B cell (primary cell): ENCODE measurements at regions of chr19 and their contacts with region 1.

Region 1: DNA sequence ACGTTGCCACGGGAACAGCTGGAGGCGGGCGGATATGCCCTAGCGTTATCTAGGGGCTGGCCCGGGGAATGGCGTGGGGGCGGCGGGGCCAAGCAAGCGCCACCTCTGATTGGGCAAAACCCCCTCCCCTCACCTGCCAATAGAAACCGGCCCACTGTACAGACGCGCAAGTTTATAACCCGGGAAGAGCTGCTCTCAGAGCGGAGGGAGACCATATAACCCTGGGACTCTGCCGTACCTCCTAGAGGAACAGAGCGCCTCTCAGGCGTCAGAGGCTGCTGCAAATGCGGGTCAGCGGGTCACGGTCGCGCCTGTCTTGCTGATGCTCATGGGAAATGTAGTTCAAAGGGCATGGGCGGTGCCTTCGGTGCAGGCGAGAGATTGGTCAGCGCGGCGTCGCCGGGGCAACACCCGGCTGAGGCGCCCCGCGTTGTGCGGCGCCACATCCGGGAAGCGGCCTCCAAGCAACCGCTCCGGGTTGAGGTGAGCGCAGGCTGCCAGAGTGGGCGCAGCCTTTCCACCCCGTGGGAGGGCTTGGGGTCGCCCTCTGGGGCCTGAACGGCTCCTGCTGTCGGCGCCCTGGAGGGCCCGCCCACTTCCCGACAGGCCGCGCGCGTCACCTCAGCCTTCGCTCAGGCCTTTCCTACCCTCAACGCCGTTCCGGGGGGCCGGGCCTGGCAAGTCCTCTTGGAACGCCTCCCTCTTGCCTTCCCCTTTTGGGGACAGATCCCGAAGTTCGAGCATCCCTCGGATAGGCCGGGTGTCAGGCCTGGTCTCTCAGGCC is at the start of gene ZNF446:
- DNase-seq: peak; percentile 97
- ATAC-seq: peak; percentile 89
- H3K4me3 ChIP-seq: peak within 1 kb of the TSS; percentile 39 to 85 (median 70)
- H3K4me3 Mint-ChIP-seq: peak within 1 kb of the TSS; percentile 98
- H3K27ac ChIP-seq: peak within 1 kb of the TSS; percentile 82 to 89
- H3K27ac Mint-ChIP-seq: peak within 1 kb of the TSS; percentile 98
- H3K4me1 ChIP-seq: peaks cover 14 to 18% of the 10 kb centered on the region in 2 donors
- H3K4me1 Mint-ChIP-seq: peaks cover 20% of the 10 kb centered on the region
- H3K27me3 ChIP-seq: no peaks in the 10 kb centered on the region
- H3K27me3 Mint-ChIP-seq: no peaks in the 10 kb centered on the region
- CTCF ChIP-seq: no peak
- total RNA-seq, gene ZNF446: 15.0 and 18.5 TPM in 2 replicates

Region 2: GRCh38 chr19:57888560-57889231 is 587.2 kb before region 1 on chr19 and contains the start of gene ZNF814:
- CTCF ChIA-PET with region 1: no interaction called
- POLR2A ChIA-PET with region 1: no interaction called
- intact Hi-C with region 1: no loop called
- DNase-seq: peak; percentile 91
- ATAC-seq: peak; percentile 93
- H3K4me3 ChIP-seq: peak within 1 kb of the TSS; percentile 75 to 97 (median 85)
- H3K4me3 Mint-ChIP-seq: peak within 1 kb of the TSS; percentile 95
- H3K27ac ChIP-seq: peak within 1 kb of the TSS; percentile 76 to 86
- H3K27ac Mint-ChIP-seq: peak within 1 kb of the TSS; percentile 90
- H3K4me1 ChIP-seq: peaks cover 17 to 19% of the 10 kb centered on the region in 2 donors
- H3K4me1 Mint-ChIP-seq: peaks cover 31% of the 10 kb centered on the region
- H3K27me3 ChIP-seq: no peaks in the 10 kb centered on the region
- H3K27me3 Mint-ChIP-seq: no peaks in the 10 kb centered on the region
- CTCF ChIP-seq: peak; percentile 40
- total RNA-seq, gene ZNF814: 83.9 and 95.1 TPM in 2 replicates

Region 3: DNA sequence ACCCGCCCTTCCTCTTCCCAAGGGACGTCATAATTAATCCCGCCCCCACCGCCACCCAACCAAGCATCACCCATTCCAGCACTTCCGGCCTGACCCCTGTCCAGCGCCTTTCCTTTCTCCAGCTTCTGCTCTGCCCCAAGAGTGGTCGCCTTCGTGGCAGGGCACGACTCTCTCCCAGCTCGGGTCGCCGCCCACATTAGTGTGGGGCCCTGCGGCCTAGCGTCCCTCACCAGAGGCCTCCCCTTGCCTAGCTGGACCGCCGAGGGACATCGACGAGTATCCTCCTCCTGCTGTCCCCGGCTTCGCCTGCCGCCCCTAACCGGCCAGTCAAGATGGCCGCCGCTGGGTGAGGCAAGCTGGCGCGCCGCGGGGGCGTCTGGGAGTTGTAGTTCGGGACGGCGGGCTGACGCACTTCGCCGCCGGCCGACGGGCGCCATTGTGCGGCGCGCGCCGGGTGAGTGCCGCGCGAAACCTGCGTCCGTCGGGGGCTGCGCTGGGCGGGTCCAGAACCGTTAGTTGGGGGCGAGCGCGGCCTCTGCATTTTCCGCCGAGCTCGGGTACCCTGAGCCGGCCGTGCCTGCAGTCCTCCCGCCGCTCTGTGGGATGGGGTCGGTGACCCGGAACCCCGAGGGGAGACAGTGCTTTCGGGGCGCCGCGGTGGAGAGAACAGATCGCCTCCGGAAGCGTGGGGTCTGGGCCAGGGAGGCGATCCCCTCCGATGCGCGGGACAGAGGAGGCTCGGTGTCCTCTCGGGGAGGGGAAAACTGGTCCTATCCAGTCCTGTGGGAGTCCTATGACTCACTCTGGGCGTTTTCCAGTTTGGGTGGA is 292.7 kb before region 1 on chr19 and contains the start of gene ZNF274:
- CTCF ChIA-PET with region 1: no interaction called
- POLR2A ChIA-PET with region 1: no interaction called
- intact Hi-C with region 1: loop called (anchors 2 kb)
- DNase-seq: peak; percentile 97
- ATAC-seq: peak; percentile 85
- H3K4me3 ChIP-seq: peak within 1 kb of the TSS; percentile 78 to 100 (median 88)
- H3K4me3 Mint-ChIP-seq: peak within 1 kb of the TSS; percentile 96
- H3K27ac ChIP-seq: peak within 1 kb of the TSS; percentile 99 to 100
- H3K27ac Mint-ChIP-seq: peak within 1 kb of the TSS; percentile 100
- H3K4me1 ChIP-seq: peaks cover 12 to 20% of the 10 kb centered on the region in 2 donors
- H3K4me1 Mint-ChIP-seq: peaks cover 26% of the 10 kb centered on the region
- H3K27me3 ChIP-seq: no peaks in the 10 kb centered on the region
- H3K27me3 Mint-ChIP-seq: no peaks in the 10 kb centered on the region
- CTCF ChIP-seq: no peak
- total RNA-seq, gene ZNF274: 83.7 and 85.4 TPM in 2 replicates

Region 4: DNA sequence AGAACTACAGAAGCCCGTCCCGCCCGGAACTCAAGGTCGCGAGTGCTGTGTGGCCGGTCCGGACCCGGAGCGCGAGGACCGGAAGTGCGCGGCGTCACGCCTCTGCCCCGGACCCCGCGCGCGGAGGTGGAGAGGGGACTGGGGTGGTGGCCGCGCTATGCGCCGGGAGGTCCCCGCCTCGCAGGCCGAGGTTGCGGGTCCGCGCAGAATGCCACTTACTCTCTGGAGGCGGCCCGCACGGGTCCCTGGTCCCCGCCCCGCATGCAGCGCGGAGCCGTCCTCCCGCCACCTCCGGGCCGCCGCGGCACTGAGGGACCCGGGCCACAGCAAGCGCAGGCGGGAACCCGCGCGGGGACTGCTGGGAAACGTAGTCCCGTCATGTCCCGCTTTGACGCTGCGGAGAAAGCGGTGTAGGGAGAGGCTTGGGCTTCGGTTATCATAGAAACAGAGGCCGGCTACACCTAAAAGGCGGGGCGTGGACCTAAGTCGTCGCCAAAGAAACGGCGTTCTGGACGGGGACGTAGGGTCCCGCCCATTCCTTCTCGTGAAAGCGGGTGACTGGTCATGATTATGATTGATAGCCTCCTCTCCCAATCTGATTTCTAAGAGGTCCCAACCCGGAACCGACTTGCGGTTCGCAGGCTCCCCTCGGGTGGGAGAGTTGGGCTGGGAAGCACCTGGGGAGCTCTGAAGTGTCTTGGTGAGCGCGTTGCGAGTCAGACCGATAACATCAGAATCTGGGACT is 95.0 kb before region 1 on chr19 and contains the start of gene ZNF837:
- CTCF ChIA-PET with region 1: interaction called, 4 read pairs
- POLR2A ChIA-PET with region 1: interaction called, 3 read pairs
- intact Hi-C with region 1: loop called (anchors 1 kb)
- DNase-seq: peak; percentile 100
- ATAC-seq: peak; percentile 86
- H3K4me3 ChIP-seq: peak within 1 kb of the TSS; percentile 22 to 78 (median 71)
- H3K4me3 Mint-ChIP-seq: peak within 1 kb of the TSS; percentile 92
- H3K27ac ChIP-seq: peak within 1 kb of the TSS; percentile 89 to 97
- H3K27ac Mint-ChIP-seq: peak within 1 kb of the TSS; percentile 95
- H3K4me1 ChIP-seq: peaks cover 27 to 35% of the 10 kb centered on the region in 2 donors
- H3K4me1 Mint-ChIP-seq: peaks cover 32% of the 10 kb centered on the region
- H3K27me3 ChIP-seq: no peaks in the 10 kb centered on the region
- H3K27me3 Mint-ChIP-seq: no peaks in the 10 kb centered on the region
- CTCF ChIP-seq: no peak
- total RNA-seq, gene ZNF837: 3.1 and 4.2 TPM in 2 replicates

Region 5: DNA sequence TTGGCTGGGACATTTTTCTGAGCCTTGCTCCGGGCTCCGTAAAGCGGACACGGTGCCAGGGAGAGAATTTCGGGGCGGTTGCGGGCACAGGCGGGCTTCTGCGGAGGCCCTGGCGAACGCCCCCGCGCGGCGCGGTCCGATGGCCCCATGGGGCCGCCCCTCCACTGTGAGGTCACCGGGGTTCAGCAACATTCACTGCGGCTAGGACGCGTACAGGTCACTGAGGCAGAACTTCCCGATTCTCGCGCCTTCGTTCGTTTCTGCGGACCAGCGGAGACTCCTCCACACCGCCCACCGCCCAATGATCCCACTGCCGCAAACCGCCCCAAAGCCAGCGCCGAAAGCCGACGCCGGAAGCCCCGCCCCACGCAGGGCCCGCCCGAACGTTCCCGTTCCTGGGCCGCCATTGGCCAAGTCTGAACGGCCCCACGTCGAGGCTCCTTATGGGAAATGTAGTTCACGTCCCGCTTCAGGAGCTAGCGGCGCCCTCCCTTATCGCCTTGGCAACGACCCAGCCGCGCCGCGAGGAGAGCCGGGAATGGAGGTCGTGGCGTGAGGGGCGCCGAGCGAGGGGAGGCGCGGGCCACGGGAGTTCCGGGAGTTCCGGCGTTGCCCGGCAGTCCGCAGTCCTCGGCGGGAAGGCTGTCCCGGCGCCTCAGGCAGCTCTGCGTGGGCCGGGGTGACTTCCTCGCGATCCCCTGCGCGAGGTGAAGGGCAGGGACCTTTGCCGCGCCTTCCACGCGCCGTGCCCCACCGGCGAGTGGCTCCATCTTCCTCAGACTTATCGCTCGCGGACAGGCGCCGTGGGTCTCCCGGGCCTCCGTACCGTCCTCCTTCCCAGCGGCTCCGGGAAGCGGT is 67.5 kb before region 1 on chr19 and contains the start of gene ZNF584:
- CTCF ChIA-PET with region 1: no interaction called
- POLR2A ChIA-PET with region 1: no interaction called
- intact Hi-C with region 1: loop called (anchors 1 kb)
- DNase-seq: peak; percentile 96
- ATAC-seq: peak; percentile 96
- H3K4me3 ChIP-seq: peak within 1 kb of the TSS; percentile 58 to 93 (median 83)
- H3K4me3 Mint-ChIP-seq: peak within 1 kb of the TSS; percentile 97
- H3K27ac ChIP-seq: peak within 1 kb of the TSS; percentile 82 to 93
- H3K27ac Mint-ChIP-seq: peak within 1 kb of the TSS; percentile 98
- H3K4me1 ChIP-seq: peaks cover 11 to 20% of the 10 kb centered on the region in 2 donors
- H3K4me1 Mint-ChIP-seq: peaks cover 33% of the 10 kb centered on the region
- H3K27me3 ChIP-seq: no peaks in the 10 kb centered on the region
- H3K27me3 Mint-ChIP-seq: no peaks in the 10 kb centered on the region
- CTCF ChIP-seq: no peak
- total RNA-seq, gene ZNF584: 12.3 and 14.0 TPM in 2 replicates

Region 6: GRCh38 chr19:58499021-58499927 is 23.4 kb after region 1 on chr19:
- CTCF ChIA-PET with region 1: no interaction called
- POLR2A ChIA-PET with region 1: no interaction called
- intact Hi-C with region 1: loop called (anchors 1 kb)
- DNase-seq: peak; percentile 96
- ATAC-seq: peak; percentile 89
- H3K4me3 ChIP-seq: peak overlapping the region; percentile 55 to 81 (median 69)
- H3K4me3 Mint-ChIP-seq: peak overlapping the region; percentile 91
- H3K27ac ChIP-seq: peak overlapping the region; percentile 74 to 85
- H3K27ac Mint-ChIP-seq: peak overlapping the region; percentile 93
- H3K4me1 ChIP-seq: peaks cover 9 to 20% of the 10 kb centered on the region in 2 donors
- H3K4me1 Mint-ChIP-seq: peaks cover 19% of the 10 kb centered on the region
- H3K27me3 ChIP-seq: no peaks in the 10 kb centered on the region
- H3K27me3 Mint-ChIP-seq: no peaks in the 10 kb centered on the region
- CTCF ChIP-seq: peak; percentile 45

Region 7: GRCh38 chr19:58531034-58531840 is 55.3 kb after region 1 on chr19:
- CTCF ChIA-PET with region 1: no interaction called
- POLR2A ChIA-PET with region 1: no interaction called
- intact Hi-C with region 1: no loop called
- DNase-seq: peak; percentile 31
- ATAC-seq: peak; percentile 17
- H3K4me3 ChIP-seq: no peak overlapping the region
- H3K4me3 Mint-ChIP-seq: peak overlapping the region; percentile 38
- H3K27ac ChIP-seq: peak overlapping the region in 1 of 2 donors; percentile 10
- H3K27ac Mint-ChIP-seq: no peak overlapping the region
- H3K4me1 ChIP-seq: peaks cover 12 to 14% of the 10 kb centered on the region in 2 donors
- H3K4me1 Mint-ChIP-seq: peaks cover 21% of the 10 kb centered on the region
- H3K27me3 ChIP-seq: no peaks in the 10 kb centered on the region
- H3K27me3 Mint-ChIP-seq: no peaks in the 10 kb centered on the region
- CTCF ChIP-seq: no peak

Region 8: GRCh38 chr19:58543826-58544590 is 68.1 kb after region 1 on chr19 and contains the start of gene TRIM28:
- CTCF ChIA-PET with region 1: no interaction called
- POLR2A ChIA-PET with region 1: no interaction called
- intact Hi-C with region 1: loop called (anchors 1 kb)
- DNase-seq: peak; percentile 100
- ATAC-seq: peak; percentile 84
- H3K4me3 ChIP-seq: peak within 1 kb of the TSS; percentile 67 to 87 (median 82)
- H3K4me3 Mint-ChIP-seq: peak within 1 kb of the TSS; percentile 97
- H3K27ac ChIP-seq: peak within 1 kb of the TSS; percentile 96
- H3K27ac Mint-ChIP-seq: peak within 1 kb of the TSS; percentile 99
- H3K4me1 ChIP-seq: peaks cover 17 to 31% of the 10 kb centered on the region in 2 donors
- H3K4me1 Mint-ChIP-seq: peaks cover 29% of the 10 kb centered on the region
- H3K27me3 ChIP-seq: peaks cover 0 to 14% (median 0%) of the 10 kb centered on the region in 4 experiments
- H3K27me3 Mint-ChIP-seq: peaks cover 15% of the 10 kb centered on the region
- CTCF ChIP-seq: no peak
- total RNA-seq, gene TRIM28: 370 and 394 TPM in 2 replicates